ENCODE measurements at regions of chr10 and their contacts with region 1.

Region 1: GRCh38 chr10:22316285-22317120 is at the start of gene COMMD3:
- DNase-seq: peak; percentile 89 to 90
- H3K4me3 ChIP-seq: peak within 1 kb of the TSS; percentile 77
- H3K4me3 Mint-ChIP-seq: peak within 1 kb of the TSS; percentile 94
- H3K27ac Mint-ChIP-seq: peak within 1 kb of the TSS; percentile 95
- H3K4me1 ChIP-seq: peaks cover 11% of the 10 kb centered on the region; the same call in 1 of the 2 replicates
- H3K4me1 Mint-ChIP-seq: peaks cover 6% of the 10 kb centered on the region
- H3K27me3 ChIP-seq: no peaks in the 10 kb centered on the region
- H3K27me3 Mint-ChIP-seq: no peaks in the 10 kb centered on the region
- CTCF ChIP-seq: no peak
- total RNA-seq, gene COMMD3: 50.7 and 55.4 TPM in 2 replicates

Region 2: DNA sequence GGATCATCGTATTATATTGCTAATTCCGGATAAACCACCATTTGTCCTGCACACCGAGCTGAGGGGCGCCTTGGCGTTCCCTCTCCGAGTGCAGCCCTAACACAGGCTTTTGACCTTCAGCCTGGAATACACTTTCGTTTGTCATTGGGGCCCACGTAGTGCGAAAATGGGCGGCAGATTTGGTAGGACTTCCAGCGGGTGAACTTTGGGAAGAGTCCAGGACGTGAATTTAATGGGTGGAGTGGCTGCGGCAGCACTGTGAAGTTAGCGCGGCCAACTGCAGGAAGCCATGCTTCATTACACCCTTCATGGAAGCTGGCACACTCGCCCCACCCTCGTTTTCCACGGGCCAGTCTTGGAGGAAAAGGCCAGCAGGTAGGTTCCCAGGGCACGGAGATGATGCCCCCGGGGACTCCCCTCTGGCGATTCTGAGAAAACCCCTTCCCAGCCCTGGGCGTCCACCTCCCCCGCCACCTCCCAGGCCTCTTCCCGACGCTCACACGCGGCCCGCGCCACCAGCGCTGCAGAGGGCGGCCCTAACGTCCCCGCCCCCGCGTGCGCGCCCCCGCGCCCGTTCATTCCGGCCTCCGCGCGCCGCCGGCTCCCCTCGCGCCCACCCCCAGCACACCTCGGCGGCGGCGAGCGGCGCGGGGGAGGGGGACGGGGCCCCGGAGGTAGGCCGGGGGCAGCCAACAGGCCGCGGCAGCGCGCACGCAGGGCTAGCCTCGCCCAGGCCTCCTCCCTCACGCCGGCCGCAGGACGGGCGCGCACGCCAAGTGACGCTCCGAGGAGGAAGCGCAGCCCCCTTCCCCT is 782.8 kb before region 1 on chr10 and contains the start of gene MLLT10:
- CTCF ChIA-PET with region 1: no interaction called
- POLR2A ChIA-PET with region 1: no interaction called
- intact Hi-C with region 1: loop called (anchors 5 kb)
- DNase-seq: peak; percentile 97 to 100
- H3K4me3 ChIP-seq: peak within 1 kb of the TSS; percentile 80
- H3K4me3 Mint-ChIP-seq: peak within 1 kb of the TSS; percentile 85
- H3K27ac Mint-ChIP-seq: peak within 1 kb of the TSS; percentile 94
- H3K4me1 ChIP-seq: peaks cover 25% of the 10 kb centered on the region
- H3K4me1 Mint-ChIP-seq: peaks cover 17% of the 10 kb centered on the region
- H3K27me3 ChIP-seq: no peaks in the 10 kb centered on the region
- H3K27me3 Mint-ChIP-seq: no peaks in the 10 kb centered on the region
- CTCF ChIP-seq: peak; percentile 30 to 44
- total RNA-seq, gene MLLT10: 84.3 and 85.3 TPM in 2 replicates

Region 3: GRCh38 chr10:22003079-22003913 is 313.2 kb before region 1 on chr10 and contains the start of gene DNAJC1:
- CTCF ChIA-PET with region 1: no interaction called
- POLR2A ChIA-PET with region 1: interaction called, 6 read pairs
- intact Hi-C with region 1: loop called (anchors 1 kb)
- DNase-seq: peak; percentile 99 to 100
- H3K4me3 ChIP-seq: peak within 1 kb of the TSS; percentile 83
- H3K4me3 Mint-ChIP-seq: peak within 1 kb of the TSS; percentile 86
- H3K27ac Mint-ChIP-seq: peak within 1 kb of the TSS; percentile 83
- H3K4me1 ChIP-seq: peaks cover 14% of the 10 kb centered on the region
- H3K4me1 Mint-ChIP-seq: peaks cover 8% of the 10 kb centered on the region
- H3K27me3 ChIP-seq: no peaks in the 10 kb centered on the region
- H3K27me3 Mint-ChIP-seq: peaks cover 14% of the 10 kb centered on the region
- CTCF ChIP-seq: no peak
- total RNA-seq, gene DNAJC1: 50.7 and 54.2 TPM in 2 replicates

Region 4: GRCh38 chr10:22228943-22229801 is 87.3 kb before region 1 on chr10:
- CTCF ChIA-PET with region 1: no interaction called
- POLR2A ChIA-PET with region 1: interaction called, 3 read pairs
- intact Hi-C with region 1: loop called (anchors 1 kb)
- DNase-seq: peak; percentile 88 to 93
- H3K4me3 ChIP-seq: peak overlapping the region; percentile 89
- H3K4me3 Mint-ChIP-seq: peak overlapping the region; percentile 80
- H3K27ac Mint-ChIP-seq: peak overlapping the region; percentile 98
- H3K4me1 ChIP-seq: peaks cover 9% of the 10 kb centered on the region; the same call in 1 of the 2 replicates
- H3K4me1 Mint-ChIP-seq: no peaks in the 10 kb centered on the region
- H3K27me3 ChIP-seq: no peaks in the 10 kb centered on the region
- H3K27me3 Mint-ChIP-seq: peaks cover 8% of the 10 kb centered on the region
- CTCF ChIP-seq: no peak

Region 5: DNA sequence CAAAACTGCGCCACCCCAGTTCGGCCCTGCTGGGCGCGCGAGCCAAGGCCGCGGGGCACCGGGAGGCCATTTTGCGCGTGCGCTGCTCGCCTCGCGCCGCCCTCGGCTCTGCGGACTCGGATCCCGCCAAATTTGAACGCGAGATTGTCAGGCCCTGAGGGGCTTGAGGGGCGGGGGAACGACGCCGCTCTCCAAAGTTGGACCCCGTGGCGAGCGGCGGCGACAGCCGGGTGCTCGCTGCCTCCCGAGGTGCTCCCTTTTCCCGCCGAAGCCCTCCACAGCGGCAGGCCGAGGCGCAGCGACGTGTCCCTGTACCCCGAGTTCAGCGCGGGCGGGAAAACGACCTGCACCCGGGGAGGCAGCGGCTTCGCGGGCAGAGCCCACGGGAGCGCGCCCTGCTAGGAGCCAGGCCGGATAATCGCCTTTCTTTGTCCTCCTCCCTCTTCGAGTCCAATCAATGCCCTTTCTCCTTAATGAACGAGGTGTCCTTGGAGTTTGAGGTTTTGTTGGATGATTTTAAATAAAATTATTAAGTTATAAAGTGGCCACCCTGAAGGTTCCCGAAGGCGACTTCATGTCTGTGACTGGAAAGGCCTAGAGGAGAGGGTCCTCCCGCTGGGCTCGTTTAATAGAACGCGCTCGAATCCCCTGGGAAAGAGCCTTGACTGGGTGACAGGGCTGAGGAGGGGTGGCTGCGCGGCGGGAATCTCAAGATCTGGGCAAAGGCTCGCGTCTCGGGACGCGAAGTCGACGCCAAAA is 18.1 kb after region 1 on chr10:
- CTCF ChIA-PET with region 1: no interaction called
- POLR2A ChIA-PET with region 1: no interaction called
- intact Hi-C with region 1: no loop called
- DNase-seq: no peak
- H3K4me3 ChIP-seq: peak overlapping the region; percentile 36
- H3K4me3 Mint-ChIP-seq: peak overlapping the region; percentile 70
- H3K27ac Mint-ChIP-seq: peak overlapping the region; percentile 71
- H3K4me1 ChIP-seq: peaks cover under 1% of the 10 kb centered on the region; the same call in 1 of the 2 replicates
- H3K4me1 Mint-ChIP-seq: no peaks in the 10 kb centered on the region
- H3K27me3 ChIP-seq: no peaks in the 10 kb centered on the region
- H3K27me3 Mint-ChIP-seq: peaks cover 2% of the 10 kb centered on the region
- CTCF ChIP-seq: no peak

Region 6: DNA sequence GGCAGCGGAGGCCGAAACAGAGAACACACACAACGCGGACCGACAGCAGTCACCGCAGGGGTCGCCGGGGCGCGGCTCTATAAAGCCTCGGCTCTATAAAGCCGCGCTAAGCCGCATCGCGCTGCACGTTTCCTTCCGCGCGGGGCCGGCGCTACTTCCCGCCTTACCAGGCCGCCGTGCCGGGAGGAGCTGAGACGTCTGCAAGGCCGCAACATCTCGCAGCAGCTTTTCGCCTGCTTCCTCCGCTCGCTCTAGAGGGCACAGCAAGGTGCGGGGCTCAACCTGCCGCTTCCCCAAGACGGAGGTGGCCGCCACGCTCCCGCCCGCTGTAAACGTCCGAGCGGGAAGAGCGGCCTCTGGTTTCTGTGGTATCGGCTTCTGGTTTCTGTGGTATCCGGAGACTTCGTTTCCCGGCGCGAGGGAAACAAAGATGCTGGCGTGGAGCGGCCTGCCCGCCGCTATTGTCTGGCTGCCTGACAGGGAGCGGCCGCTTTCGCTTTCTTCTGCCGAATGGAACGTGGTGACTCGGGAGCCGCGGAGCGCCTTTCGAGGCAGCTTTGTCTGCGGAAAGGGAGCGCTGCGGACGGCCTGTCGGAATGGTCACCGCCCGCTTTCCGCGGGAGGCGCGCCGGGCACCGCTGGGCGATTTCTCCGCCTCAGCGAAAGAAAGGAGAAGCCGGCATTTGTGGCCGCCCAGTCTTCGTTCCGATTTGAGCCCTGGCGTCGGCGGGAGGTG is 120.5 kb after region 1 on chr10:
- CTCF ChIA-PET with region 1: no interaction called
- POLR2A ChIA-PET with region 1: interaction called, 11 read pairs
- intact Hi-C with region 1: no loop called
- DNase-seq: peak; percentile 84 to 85
- H3K4me3 ChIP-seq: peak overlapping the region; percentile 54
- H3K4me3 Mint-ChIP-seq: peak overlapping the region; percentile 92
- H3K27ac Mint-ChIP-seq: peak overlapping the region; percentile 90
- H3K4me1 ChIP-seq: peaks cover 41% of the 10 kb centered on the region
- H3K4me1 Mint-ChIP-seq: peaks cover 62% of the 10 kb centered on the region
- H3K27me3 ChIP-seq: no peaks in the 10 kb centered on the region
- H3K27me3 Mint-ChIP-seq: no peaks in the 10 kb centered on the region
- CTCF ChIP-seq: peak in 1 of 2 experiments; percentile 41